Activated CD4-positive, alpha-beta T cell treated with anti-CD3 and anti-CD28 coated beads, Interleukin-2, amount 10 ng/mL, durations not matched to agents 24 days and 14 days (primary cell): ENCODE measurements at regions of chr12 and their contacts with region 1.

Region 1: DNA sequence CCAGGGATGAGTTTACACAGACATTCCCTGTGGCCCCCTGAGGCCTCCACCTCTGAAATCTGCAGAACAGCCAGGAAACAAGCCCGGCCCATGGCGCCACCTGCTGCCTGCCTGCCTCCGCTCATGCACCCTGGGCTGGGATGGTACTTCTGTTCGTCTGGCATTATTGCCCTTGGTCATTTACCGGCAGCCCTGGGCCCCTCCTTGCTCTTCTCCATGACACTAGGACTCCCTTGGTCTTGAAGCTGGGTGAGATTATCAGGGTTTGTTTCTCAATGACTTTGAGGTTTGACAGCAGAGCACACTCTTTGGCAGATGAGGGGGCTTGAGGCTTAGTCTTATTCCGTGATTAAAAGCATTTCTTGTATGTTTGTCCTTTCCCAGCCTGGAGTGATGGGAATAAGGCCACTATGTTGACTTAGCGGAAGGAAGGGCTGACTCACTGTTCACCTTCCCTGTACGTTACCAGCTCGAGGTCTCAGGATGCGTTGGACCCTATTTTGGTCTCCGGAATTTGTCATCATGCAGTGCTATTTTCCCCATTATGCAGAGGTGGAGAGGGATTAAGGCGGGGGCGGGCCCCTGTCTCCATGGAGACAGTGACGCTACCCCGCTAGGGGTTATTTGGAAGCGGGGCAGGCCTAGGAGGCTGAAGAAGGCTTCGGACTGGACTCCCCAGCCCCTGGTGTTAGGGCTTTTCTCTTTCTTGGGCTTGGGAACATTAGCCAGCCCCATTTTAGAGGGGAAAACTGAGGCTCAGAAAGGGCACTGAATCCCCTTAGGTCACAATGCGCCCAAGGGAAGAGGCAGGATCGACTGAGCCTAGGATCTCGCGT is 706 bp upstream of the PEX5 start:
- DNase-seq: peak; percentile 89
- H3K4me3 Mint-ChIP-seq: peak overlapping the region; percentile 93
- H3K27ac Mint-ChIP-seq: peak overlapping the region; percentile 96
- H3K4me1 Mint-ChIP-seq: peaks cover 22% of the 10 kb centered on the region
- H3K27me3 Mint-ChIP-seq: no peaks in the 10 kb centered on the region

Region 2: DNA sequence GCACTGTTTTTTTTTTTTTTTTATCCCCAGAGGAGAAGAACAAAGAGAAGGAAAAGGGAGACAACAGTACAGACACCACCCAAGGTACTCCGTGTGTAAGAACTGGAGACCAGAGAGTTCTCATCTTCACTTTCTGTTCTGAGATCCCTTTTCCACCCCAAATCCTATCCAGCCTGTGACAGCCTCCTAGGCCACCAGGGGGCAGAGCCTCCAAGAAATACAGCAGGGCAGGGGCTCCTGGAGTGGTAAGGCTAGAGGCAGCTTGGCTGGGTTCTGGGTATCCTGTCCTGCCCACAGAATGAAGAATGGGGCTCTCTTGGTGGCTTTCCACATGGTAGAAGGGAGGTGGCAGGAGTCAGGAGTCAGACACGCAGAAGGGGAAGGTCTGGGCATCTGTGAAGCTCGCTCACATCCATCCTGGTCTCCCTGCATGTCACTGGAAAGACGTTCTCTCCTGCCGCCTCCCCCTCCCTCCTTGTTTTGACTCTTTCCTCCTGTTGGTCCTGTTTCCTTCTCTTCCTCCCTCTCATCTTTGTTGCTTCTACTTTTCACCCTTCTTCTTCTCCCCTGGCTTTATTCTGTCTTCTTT is 46.6 kb before region 1 on chr12:
- intact Hi-C with region 1: loop called (anchors 1 kb)
- DNase-seq: peak; percentile 86
- H3K4me3 Mint-ChIP-seq: no peak overlapping the region
- H3K27ac Mint-ChIP-seq: no peak overlapping the region
- H3K4me1 Mint-ChIP-seq: peaks cover 7% of the 10 kb centered on the region
- H3K27me3 Mint-ChIP-seq: no peaks in the 10 kb centered on the region

Region 3: DNA sequence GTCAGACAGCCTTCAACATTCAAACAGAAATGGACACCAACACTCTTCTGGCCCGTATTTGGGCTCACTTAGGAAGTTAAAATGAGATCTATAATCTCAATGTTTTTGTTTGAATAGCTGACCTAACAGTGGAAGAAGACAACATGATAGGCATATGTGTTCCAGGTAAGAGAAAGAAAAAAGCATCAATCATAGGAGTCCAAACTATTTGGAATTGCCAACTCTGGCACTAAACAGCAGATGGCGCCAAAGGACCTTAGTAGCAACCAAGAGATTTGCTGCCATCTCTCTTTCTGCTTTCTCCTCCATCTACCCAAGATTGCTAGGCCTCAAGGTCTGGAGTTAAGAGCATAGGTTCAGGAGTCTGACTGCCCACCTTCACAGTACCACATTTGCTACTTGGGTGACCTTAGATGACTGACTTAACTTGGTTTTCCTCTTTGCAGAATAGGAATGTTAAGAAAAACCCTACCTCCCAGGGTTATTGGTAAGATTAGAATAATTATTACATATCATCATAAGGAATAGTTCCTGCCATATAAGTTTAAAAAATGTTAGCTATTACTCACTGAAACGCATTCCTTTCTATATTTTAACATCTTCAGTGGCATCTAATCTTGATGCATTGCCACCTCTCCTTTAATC is 30.9 kb after region 1 on chr12:
- intact Hi-C with region 1: no loop called
- DNase-seq: peak; percentile 91
- H3K4me3 Mint-ChIP-seq: no peak overlapping the region
- H3K27ac Mint-ChIP-seq: no peak overlapping the region
- H3K4me1 Mint-ChIP-seq: no peaks in the 10 kb centered on the region
- H3K27me3 Mint-ChIP-seq: no peaks in the 10 kb centered on the region

Region 4: GRCh38 chr12:7282844-7283243 is 94.1 kb after region 1 on chr12:
- intact Hi-C with region 1: no loop called
- DNase-seq: no peak
- H3K4me3 Mint-ChIP-seq: no peak overlapping the region
- H3K27ac Mint-ChIP-seq: no peak overlapping the region
- H3K4me1 Mint-ChIP-seq: no peaks in the 10 kb centered on the region
- H3K27me3 Mint-ChIP-seq: peaks cover 11% of the 10 kb centered on the region

Region 5: DNA sequence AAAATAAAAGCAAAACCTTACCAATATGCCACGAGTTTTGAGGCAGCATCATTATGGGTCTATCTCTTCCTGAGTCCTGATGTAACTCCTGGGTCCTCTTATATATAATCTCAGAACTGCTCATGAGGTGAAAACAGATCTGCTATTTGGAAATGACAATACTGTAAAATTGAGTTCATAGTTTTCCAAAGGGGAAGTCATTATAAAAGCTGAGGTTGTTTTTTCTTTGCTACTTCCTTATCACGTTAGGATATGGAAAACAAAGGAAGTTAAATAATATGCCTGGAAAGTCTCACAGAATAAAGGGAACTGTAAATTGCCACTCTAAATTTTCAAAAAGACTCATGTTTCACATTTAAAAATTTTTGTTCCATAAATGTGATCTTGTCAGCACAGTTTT is 255.3 kb after region 1 on chr12 and contains the start of gene CD163L1:
- intact Hi-C with region 1: no loop called
- DNase-seq: no peak
- H3K4me3 Mint-ChIP-seq: no peak within 1 kb of the TSS
- H3K27ac Mint-ChIP-seq: no peak within 1 kb of the TSS
- H3K4me1 Mint-ChIP-seq: peaks cover 5% of the 10 kb centered on the region
- H3K27me3 Mint-ChIP-seq: peaks cover 50% of the 10 kb centered on the region
- total RNA-seq, gene CD163L1: not detected in 2 replicates